ENCODE measurements at regions of chr1 and their contacts with region 1.

Region 1: GRCh38 chr1:145740266-145740665 is 21.0 kb downstream of the CD160 start:
- DNase-seq: no peak
- CTCF ChIP-seq: no peak

Region 2: DNA sequence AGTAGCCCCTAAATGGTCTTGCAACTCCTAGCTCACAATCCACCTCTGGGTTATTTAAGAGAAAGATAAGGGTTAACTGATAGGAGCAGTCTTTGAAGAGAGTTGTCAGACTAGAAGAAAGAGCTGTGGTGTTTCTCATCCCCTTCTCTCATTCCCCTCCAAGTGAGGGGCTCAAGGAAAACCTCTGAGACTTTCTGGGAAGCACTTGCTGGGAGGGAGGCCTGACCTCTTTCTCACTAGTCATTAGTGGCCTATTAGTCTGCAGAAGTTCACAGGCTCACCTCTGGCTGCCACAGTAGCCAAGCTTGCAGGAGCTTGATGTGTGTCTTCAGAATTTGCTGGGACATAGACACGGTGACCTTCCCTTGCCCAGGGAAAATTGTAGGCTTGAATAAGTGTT is 138.7 kb before region 1 on chr1:
- in situ Hi-C with region 1: loop called (anchors 25 kb)
- DNase-seq: no peak
- CTCF ChIP-seq: no peak

Measured in GM13977 (cell line).